ENCODE measurements at regions of chr6 and their contacts with region 1.

Region 1: DNA sequence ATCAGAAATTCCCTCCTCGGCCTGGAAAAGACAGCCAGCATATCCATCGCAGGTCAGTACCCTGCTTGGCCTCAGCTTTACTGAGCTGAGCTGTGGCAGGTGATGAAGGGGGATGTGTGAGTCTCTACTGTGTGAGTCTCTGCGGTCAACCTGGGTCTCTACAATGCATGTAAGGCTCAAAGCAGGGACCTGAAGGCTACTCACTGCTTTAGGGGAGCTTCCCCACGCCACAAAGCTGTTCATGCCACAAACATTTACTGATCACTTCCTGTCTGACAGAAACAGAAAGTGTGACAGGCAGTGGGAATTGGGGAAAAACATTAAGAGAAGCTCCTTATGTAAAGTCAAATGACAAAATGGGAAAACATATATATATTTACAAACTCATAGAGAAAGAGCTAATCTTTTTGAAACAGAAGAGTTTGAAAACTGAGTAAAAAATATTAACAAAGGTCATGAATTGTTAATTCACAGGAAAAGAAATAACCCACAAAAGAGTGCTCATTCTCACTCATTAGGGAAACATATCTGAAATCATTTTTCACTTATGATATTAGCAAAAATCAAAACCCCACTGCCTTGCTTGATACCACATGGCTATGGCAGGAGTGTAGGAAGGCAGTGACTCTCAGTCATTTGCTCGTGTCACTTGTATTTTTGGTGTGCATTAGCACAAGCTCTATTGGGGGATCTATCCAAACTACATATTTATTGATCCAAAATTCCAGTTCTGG is 5.8 kb downstream of the BTN3A3 start:
- DNase-seq: peak; percentile 76
- ATAC-seq: peak; percentile 98
- H3K4me3 ChIP-seq: peak overlapping the region; percentile 19; the same call in 1 of the 2 replicates
- H3K27ac ChIP-seq: peak overlapping the region; percentile 58
- H3K4me1 ChIP-seq: peaks cover 21% of the 10 kb centered on the region
- H3K27me3 ChIP-seq: no peaks in the 10 kb centered on the region
- CTCF ChIP-seq: no peak
- EP300 ChIP-seq: peak in 1 of 2 experiments; percentile 65; a peak in 1 of 4 replicates
- POLR2A ChIP-seq: no peak
- RAD21 ChIP-seq: no peak

Region 2: DNA sequence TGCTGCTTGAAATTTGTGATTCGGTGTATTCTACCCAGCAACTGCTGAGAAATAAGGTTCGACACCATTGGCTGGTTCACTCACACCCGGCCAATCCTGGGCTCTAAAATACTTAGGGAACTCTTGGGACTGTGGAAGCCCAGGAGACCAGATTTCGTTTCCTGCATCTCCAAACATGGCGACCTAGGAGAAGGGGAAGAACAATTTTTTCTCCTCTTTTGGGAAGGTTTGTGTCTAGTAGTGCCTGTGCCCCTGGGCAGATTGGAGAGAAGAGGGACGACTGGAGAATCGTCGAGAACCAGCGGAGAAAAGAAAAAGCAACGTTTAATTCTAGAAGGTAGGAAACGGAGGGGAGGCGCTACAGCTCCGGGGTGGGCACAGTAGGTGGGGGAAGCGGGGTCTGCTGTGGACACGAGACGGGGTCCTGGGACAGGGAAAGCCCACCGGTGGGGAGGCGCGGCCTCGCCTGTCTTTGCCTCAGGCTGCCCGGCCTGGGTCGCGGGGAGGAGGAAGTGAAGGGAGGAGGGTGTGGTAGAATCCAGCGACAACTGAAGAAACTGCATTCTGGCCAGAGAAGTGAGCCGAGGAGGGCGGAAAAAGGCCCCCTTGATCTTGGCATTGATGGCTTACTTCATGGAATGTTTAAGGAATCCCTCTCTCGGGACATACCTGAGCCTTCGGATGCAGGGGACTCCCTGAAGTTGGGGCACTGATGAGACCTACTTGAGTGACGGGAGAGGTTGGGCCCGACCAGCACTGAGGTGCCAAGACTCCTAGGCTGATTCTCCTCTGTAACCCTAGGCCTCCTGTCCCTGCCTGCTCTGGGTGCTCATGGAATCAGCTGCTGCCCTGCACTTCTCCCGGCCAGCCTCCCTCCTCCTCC is 11.9 kb after region 1 on chr6 and contains the start of gene BTN2A1:
- CTCF ChIA-PET with region 1: interaction called, 6 read pairs
- POLR2A ChIA-PET with region 1: interaction called, 21 read pairs
- RAD21 ChIA-PET with region 1: interaction called, 5 read pairs
- SMC1A ChIA-PET with region 1: interaction called, 25 read pairs
- in situ Hi-C with region 1: no loop called
- intact Hi-C with region 1: no loop called
- DNase-seq: peak; percentile 70
- ATAC-seq: peak; percentile 98
- H3K4me3 ChIP-seq: peak within 1 kb of the TSS; percentile 85
- H3K27ac ChIP-seq: peak within 1 kb of the TSS; percentile 97
- H3K4me1 ChIP-seq: peaks cover 22% of the 10 kb centered on the region
- H3K27me3 ChIP-seq: no peaks in the 10 kb centered on the region
- CTCF ChIP-seq: no peak
- EP300 ChIP-seq: no peak
- POLR2A ChIP-seq: peak; percentile 66; the same call in 1 of the 2 replicates
- RAD21 ChIP-seq: no peak
- polyA plus RNA-seq, gene BTN2A1: 15.6 to 15.9 TPM

Region 3: GRCh38 chr6:26464416-26465131 is 18.5 kb after region 1 on chr6:
- CTCF ChIA-PET with region 1: interaction called, 3 read pairs
- POLR2A ChIA-PET with region 1: interaction called, 12 read pairs
- RAD21 ChIA-PET with region 1: interaction called, 5 read pairs
- SMC1A ChIA-PET with region 1: interaction called, 8 read pairs
- in situ Hi-C with region 1: no loop called
- intact Hi-C with region 1: no loop called
- DNase-seq: no peak
- ATAC-seq: peak; percentile 54
- H3K4me3 ChIP-seq: no peak overlapping the region
- H3K27ac ChIP-seq: peak overlapping the region; percentile 52
- H3K4me1 ChIP-seq: peaks cover 21% of the 10 kb centered on the region
- H3K27me3 ChIP-seq: no peaks in the 10 kb centered on the region
- CTCF ChIP-seq: no peak
- EP300 ChIP-seq: no peak
- POLR2A ChIP-seq: no peak
- RAD21 ChIP-seq: no peak